Heart left ventricle (tissue), 16 donors: ENCODE measurements at regions of chr12 and their contacts with region 1.

Region 1: DNA sequence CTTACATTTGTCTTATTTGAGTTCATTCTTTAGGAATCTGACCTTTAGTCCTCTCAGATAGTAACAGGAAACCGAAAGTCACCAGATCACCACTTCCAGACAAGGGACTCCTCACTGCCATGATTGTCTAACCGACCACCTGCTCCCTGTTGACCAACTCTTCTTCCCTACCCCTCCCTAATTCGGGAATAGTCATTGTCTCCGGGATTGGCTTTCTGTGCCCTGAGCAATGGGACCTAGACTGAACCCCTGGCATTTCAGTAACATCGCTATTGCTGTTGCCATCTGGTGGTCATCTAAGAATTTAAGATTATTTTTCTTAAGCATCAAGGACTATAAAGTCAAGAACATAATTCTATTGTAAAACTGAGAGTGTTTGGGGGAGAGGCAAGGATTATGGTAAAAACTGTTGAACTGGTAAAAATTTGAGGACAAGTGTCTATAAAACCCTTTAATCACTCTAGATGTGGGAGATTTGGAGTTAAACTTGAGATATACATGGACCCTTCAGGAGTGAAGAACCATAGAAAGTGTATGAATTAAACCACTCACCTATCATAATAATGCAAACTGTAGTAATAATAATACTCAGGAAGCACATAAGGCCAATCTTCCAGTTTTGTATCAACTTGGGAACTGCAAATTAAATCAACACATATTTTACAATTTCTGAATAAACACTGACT is 6.3 kb downstream of the CLEC2A start:
- DNase-seq: no peak
- ATAC-seq: peak in 3 of 4 donors; percentile 46 to 54 (median 52)
- H3K4me3 ChIP-seq: peak overlapping the region in 4 of 12 donors; percentile 27 to 45 (median 36)
- H3K27ac ChIP-seq: no peak overlapping the region
- H3K4me1 ChIP-seq: no peaks in the 10 kb centered on the region
- H3K27me3 ChIP-seq: peaks cover 0 to 4% (median 0%) of the 10 kb centered on the region in 9 donors
- CTCF ChIP-seq: peak in 11 of 12 donors; percentile 10 to 63 (median 44)
- POLR2A ChIP-seq: no peak

Region 2: GRCh38 chr12:9745199-9745598 is 180.7 kb before region 1 on chr12:
- intact Hi-C with region 1: loop called (anchors 2 to 5 kb)
- DNase-seq: no peak
- ATAC-seq: no peak
- H3K4me3 ChIP-seq: no peak overlapping the region
- H3K27ac ChIP-seq: no peak overlapping the region
- H3K4me1 ChIP-seq: peaks cover 0 to 30% (median 5%) of the 10 kb centered on the region in 12 donors
- H3K27me3 ChIP-seq: no peaks in the 10 kb centered on the region
- CTCF ChIP-seq: no peak
- POLR2A ChIP-seq: no peak

Region 3: DNA sequence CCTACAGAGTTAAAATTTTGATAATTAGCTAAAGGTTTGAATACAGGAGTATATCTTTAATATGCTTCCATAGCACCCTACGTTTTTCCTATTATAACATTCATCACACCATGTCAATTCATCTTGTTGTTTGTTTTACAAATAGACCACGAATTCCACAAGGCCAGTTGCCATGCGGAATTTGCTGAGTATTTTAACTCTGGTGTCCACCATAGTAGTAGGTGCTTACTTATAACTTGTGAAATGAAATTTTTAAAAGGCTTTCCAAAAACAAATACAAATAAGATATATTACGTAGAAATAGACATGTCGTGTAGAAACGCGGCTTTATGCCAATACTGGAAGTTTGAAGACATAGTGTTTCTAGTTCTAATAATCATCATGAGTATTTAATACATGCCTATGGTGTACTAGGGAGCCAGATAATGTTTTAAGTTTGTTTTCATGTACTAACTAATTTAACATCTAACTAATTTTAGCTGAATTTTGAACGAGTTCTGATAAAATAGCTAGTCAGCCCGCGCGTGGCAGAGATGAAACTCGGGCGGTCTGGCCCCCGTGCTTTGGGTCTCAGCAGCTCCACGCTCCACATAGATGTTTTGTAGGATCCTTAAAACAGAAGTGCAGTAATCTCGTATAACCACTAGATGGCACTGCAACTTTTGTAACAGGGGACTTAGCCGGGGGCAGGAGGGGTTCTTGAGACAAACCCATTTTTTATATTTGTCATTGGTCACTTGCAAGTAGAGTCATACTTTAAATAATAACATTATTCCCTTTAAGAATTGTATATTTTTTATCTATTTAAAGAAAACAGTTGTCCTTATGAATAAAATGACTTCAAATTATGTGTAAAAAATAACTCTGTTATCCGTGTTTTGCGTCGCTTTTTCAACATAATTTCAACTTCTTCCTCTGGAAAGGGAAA is 175.3 kb before region 1 on chr12:
- intact Hi-C with region 1: loop called (anchors 2 to 5 kb)
- DNase-seq: peak in 3 of 5 donors; percentile 29 to 51 (median 34)
- ATAC-seq: peak in 3 of 4 donors; percentile 70 to 95 (median 88)
- H3K4me3 ChIP-seq: peak overlapping the region in 7 of 12 donors; percentile 10 to 29 (median 22)
- H3K27ac ChIP-seq: no peak overlapping the region
- H3K4me1 ChIP-seq: peaks cover 0 to 14% (median 0%) of the 10 kb centered on the region in 12 donors
- H3K27me3 ChIP-seq: no peaks in the 10 kb centered on the region
- CTCF ChIP-seq: peak; percentile 78 to 90 (median 84)
- POLR2A ChIP-seq: no peak

Region 4: GRCh38 chr12:9813821-9814809 is 111.7 kb before region 1 on chr12:
- intact Hi-C with region 1: loop called in 9 of 10 experiments (anchors 1 to 10 kb)
- DNase-seq: peak; percentile 68 to 91 (median 71)
- ATAC-seq: peak; percentile 73 to 96 (median 92)
- H3K4me3 ChIP-seq: peak overlapping the region in 10 of 12 donors; percentile 8 to 49 (median 30)
- H3K27ac ChIP-seq: no peak overlapping the region
- H3K4me1 ChIP-seq: peaks cover 0 to 18% (median 0%) of the 10 kb centered on the region in 12 donors
- H3K27me3 ChIP-seq: peaks cover 0 to 17% (median 0%) of the 10 kb centered on the region in 9 donors
- CTCF ChIP-seq: peak; percentile 41 to 80 (median 66)
- POLR2A ChIP-seq: no peak